ENCODE measurements at regions of chr7 and their contacts with region 1.

Region 1: DNA sequence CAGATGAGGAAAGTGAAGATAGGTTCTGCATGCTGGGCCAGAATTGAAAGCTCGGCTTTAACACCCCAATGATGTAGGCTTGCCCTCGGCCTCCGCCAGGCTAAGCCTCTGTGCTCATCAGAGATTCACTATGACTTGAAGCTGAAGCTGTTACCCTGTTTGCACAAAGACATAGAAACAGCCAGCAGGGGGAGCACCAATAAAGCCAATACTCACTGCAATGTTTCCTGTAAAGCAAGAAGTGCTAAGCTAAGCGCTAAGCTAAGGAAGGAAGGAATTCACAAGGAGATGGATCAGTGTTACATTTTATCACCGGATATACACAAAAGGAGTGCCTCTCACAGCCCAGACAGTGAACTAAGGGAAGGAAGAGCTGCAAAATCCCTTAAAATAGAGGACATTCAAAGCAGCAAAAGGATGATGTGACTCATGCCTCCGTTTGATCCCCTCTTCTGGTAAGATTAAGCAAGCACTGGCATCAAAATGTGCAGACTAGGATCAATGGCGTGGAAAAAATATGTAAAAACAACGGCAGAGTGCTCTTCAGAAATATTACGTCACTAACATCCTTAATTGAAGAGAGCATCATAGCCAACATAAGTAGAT is 153.8 kb downstream of the COBL start:
- DNase-seq: peak in 9 of 10 donors; percentile 68 to 97 (median 83)
- H3K4me3 ChIP-seq: peak overlapping the region in 2 of 59 donors; percentile 2 to 9
- H3K27ac ChIP-seq: peak overlapping the region in 55 of 59 donors; percentile 3 to 97 (median 57)
- H3K27me3 ChIP-seq: no peaks in the 10 kb centered on the region
- CTCF ChIP-seq: peak; percentile 69 to 97 (median 92)

Region 2: GRCh38 chr7:50142425-50143017 is 1020.3 kb before region 1 on chr7:
- intact Hi-C with region 1: loop called in 1 of 2 experiments (anchors 5 kb)
- DNase-seq: no peak
- H3K4me3 ChIP-seq: peak overlapping the region in 6 of 59 donors; percentile 12 to 28 (median 16)
- H3K27ac ChIP-seq: no peak overlapping the region
- H3K27me3 ChIP-seq: peaks cover 0 to 7% (median 0%) of the 10 kb centered on the region in 45 donors
- CTCF ChIP-seq: peak; percentile 57 to 82 (median 73)

Region 3: DNA sequence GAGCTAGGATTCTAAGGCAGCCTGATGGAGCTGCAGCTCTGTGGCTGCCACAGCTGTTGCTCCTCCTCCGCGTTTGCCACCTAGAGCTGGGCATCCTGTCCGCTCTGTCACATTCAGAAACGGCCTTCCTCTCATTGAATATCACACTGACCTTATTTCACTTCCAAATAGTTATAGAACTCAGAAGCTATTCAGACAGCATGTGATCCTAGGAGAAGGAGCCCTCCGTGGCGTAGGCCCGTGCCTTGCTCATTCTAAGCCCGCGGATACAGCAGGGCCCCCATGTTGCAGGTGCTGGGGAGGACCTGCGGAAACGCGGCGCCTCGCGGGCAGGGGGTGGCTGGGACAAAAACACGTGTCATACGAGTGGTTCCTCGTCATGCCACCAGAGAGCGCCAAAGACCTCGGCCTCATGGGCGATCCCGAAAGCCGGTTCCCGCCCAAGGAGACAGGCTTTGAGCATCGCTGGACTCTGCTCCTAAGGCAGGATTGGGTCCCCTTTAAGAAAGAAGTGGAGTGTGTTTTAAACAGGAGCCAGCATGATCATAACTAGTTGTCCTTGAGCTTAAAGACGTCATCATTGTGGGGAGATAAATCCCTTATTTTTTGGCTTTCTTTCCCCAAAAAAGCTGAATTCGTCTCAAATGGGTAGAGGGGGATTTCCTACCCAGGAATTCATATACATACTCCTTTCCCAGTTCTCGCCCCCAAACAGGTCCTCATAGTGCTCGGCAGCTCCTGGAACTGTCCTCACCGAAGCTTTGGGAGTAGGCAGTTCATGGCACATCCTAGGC is 694.8 kb before region 1 on chr7:
- intact Hi-C with region 1: loop called (anchors 2 to 5 kb)
- DNase-seq: peak; percentile 73 to 87 (median 84)
- H3K4me3 ChIP-seq: peak overlapping the region in 46 of 59 donors; percentile 5 to 61 (median 32)
- H3K27ac ChIP-seq: peak overlapping the region in 5 of 59 donors; percentile 3 to 28 (median 13)
- H3K27me3 ChIP-seq: no peaks in the 10 kb centered on the region
- CTCF ChIP-seq: peak; percentile 75 to 97 (median 90)

Region 4: DNA sequence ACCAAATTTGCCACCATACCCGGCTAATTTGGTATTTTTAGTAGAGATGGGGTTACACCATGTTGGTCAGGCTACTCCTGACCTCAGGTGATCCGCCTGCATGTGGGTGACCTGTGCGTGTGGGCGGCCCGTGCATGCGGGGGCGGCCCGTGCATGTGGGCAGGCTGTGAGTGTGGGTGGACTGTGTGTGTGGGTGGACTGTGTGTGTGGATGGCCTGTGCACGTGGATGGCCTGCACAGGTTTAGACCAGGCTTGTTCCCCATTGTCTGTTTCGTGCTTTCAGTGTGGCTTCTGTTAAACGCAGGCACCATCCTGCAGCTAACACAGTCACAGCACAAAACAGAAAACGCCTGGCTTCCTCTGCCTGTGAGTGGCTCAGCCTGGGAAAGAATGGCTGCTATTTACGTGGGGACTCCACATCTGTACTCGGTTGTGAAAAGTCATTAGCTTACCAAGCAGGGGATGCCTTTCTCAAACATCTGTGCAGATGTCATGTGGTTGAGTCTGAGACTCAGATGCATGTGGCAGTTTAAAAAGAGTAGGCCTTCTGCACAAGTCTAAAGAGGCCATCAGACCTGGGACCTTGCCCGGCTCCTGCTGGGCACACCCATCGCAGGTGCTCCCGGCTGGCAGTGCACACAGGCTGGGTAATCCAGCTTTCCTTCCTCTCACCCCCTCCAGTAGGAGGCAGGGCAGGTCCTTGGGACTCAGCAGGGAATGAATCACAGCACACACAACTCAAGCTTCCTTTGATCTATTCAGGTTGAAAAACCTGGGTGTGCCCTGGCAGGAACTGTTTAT is 62.2 kb after region 1 on chr7:
- intact Hi-C with region 1: loop called in 1 of 2 experiments (anchors 5 kb)
- DNase-seq: peak in 2 of 10 donors; percentile 40 to 55
- H3K4me3 ChIP-seq: peak overlapping the region in 1 of 59 donors; percentile 23
- H3K27ac ChIP-seq: peak overlapping the region in 56 of 59 donors; percentile 1 to 88 (median 72)
- H3K27me3 ChIP-seq: no peaks in the 10 kb centered on the region
- CTCF ChIP-seq: peak in 50 of 56 donors; percentile 16 to 63 (median 44)

Region 5: GRCh38 chr7:51357821-51358220 is 195.0 kb after region 1 on chr7:
- intact Hi-C with region 1: loop called (anchors 2 kb)
- DNase-seq: no peak
- H3K4me3 ChIP-seq: no peak overlapping the region
- H3K27ac ChIP-seq: peak overlapping the region in 1 of 59 donors; percentile 1
- H3K27me3 ChIP-seq: no peaks in the 10 kb centered on the region
- CTCF ChIP-seq: peak in 51 of 56 donors; percentile 28 to 79 (median 52)

Measured in dorsolateral prefrontal cortex (tissue), 120 donors.